CD8-positive, alpha-beta T cell (primary cell): ENCODE measurements at regions of chr5 and their contacts with region 1.

Region 1: GRCh38 chr5:54867310-54867944 is 118.0 kb downstream of the ESM1 start:
- DNase-seq: peak in 2 of 9 experiments; percentile 63 to 76
- ATAC-seq: peak; percentile 72
- H3K4me3 ChIP-seq: no peak overlapping the region
- H3K4me3 Mint-ChIP-seq: peak overlapping the region; percentile 37
- H3K27ac ChIP-seq: no peak overlapping the region
- H3K27ac Mint-ChIP-seq: no peak overlapping the region
- H3K4me1 ChIP-seq: no peaks in the 10 kb centered on the region
- H3K4me1 Mint-ChIP-seq: peaks cover 4% of the 10 kb centered on the region
- H3K27me3 ChIP-seq: no peaks in the 10 kb centered on the region
- H3K27me3 Mint-ChIP-seq: peaks cover 5% of the 10 kb centered on the region
- CTCF ChIP-seq: peak; percentile 71

Region 2: GRCh38 chr5:54492178-54492577 is 375.2 kb before region 1 on chr5:
- CTCF ChIA-PET with region 1: interaction called, 14 read pairs
- POLR2A ChIA-PET with region 1: no interaction called
- intact Hi-C with region 1: no loop called
- DNase-seq: no peak
- ATAC-seq: no peak
- H3K4me3 ChIP-seq: no peak overlapping the region
- H3K4me3 Mint-ChIP-seq: no peak overlapping the region
- H3K27ac ChIP-seq: no peak overlapping the region
- H3K27ac Mint-ChIP-seq: no peak overlapping the region
- H3K4me1 ChIP-seq: no peaks in the 10 kb centered on the region
- H3K4me1 Mint-ChIP-seq: peaks cover 3% of the 10 kb centered on the region
- H3K27me3 ChIP-seq: peaks cover 3 to 4% of the 10 kb centered on the region in 2 experiments
- H3K27me3 Mint-ChIP-seq: peaks cover 8% of the 10 kb centered on the region
- CTCF ChIP-seq: no peak

Region 3: DNA sequence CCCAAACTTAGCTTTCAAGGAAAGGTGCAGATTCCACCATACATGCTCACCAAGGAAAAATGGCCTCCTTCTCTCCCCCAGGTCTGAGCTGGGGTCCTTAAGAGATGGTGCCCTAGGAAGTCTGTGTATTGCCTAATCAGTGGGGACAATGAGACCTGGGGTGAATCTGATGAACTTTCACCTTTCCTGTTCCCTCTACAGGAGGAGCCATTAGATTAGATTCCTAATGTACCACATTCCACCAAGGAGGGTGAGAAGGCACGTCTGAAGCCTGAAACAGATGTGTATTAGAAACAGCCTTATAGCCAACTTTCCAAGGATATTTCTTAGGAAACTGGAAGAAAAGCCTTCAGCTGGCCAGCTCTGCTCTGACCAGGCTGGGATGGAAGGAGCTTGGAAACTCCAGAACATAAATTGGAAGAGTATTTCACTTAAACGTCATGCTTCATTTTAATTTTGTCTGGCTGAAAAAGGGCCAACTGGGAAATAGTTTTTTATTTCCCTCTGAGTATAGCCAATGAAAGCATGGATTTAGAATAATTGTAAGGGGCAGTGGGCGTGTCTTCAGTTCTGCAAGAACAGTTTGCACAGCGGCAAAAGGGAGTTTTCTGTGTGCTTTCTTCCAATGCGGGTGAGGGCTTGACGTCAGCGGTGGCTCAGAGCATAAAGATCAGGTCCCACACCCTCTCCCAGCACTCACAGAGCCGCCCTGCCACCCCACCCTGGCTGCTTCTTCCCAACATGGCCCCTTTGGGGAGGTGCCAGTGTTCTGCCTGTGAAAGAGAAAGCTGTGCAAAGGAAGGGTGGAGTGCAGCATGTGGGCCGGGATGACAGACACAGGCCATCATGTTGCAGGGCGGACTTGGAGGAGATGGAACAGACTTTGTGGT is 92.9 kb before region 1 on chr5:
- CTCF ChIA-PET with region 1: no interaction called
- POLR2A ChIA-PET with region 1: no interaction called
- intact Hi-C with region 1: no loop called
- DNase-seq: no peak
- ATAC-seq: no peak
- H3K4me3 ChIP-seq: no peak overlapping the region
- H3K4me3 Mint-ChIP-seq: no peak overlapping the region
- H3K27ac ChIP-seq: no peak overlapping the region
- H3K27ac Mint-ChIP-seq: no peak overlapping the region
- H3K4me1 ChIP-seq: no peaks in the 10 kb centered on the region
- H3K4me1 Mint-ChIP-seq: no peaks in the 10 kb centered on the region
- H3K27me3 ChIP-seq: no peaks in the 10 kb centered on the region
- H3K27me3 Mint-ChIP-seq: peaks cover 5% of the 10 kb centered on the region
- CTCF ChIP-seq: no peak

Region 4: GRCh38 chr5:54844905-54845566 is 22.4 kb before region 1 on chr5:
- CTCF ChIA-PET with region 1: interaction called, 27 read pairs
- POLR2A ChIA-PET with region 1: no interaction called
- intact Hi-C with region 1: no loop called
- DNase-seq: peak in 2 of 9 experiments; percentile 59 to 70
- ATAC-seq: no peak
- H3K4me3 ChIP-seq: no peak overlapping the region
- H3K4me3 Mint-ChIP-seq: peak overlapping the region; percentile 55
- H3K27ac ChIP-seq: no peak overlapping the region
- H3K27ac Mint-ChIP-seq: peak overlapping the region; percentile 15
- H3K4me1 ChIP-seq: peaks cover 3% of the 10 kb centered on the region
- H3K4me1 Mint-ChIP-seq: peaks cover 3% of the 10 kb centered on the region
- H3K27me3 ChIP-seq: no peaks in the 10 kb centered on the region
- H3K27me3 Mint-ChIP-seq: peaks cover 9% of the 10 kb centered on the region
- CTCF ChIP-seq: peak; percentile 78

Region 5: GRCh38 chr5:54854883-54855581 is 12.4 kb before region 1 on chr5:
- CTCF ChIA-PET with region 1: interaction called, 16 read pairs
- POLR2A ChIA-PET with region 1: no interaction called
- intact Hi-C with region 1: no loop called
- DNase-seq: no peak
- ATAC-seq: no peak
- H3K4me3 ChIP-seq: no peak overlapping the region
- H3K4me3 Mint-ChIP-seq: no peak overlapping the region
- H3K27ac ChIP-seq: no peak overlapping the region
- H3K27ac Mint-ChIP-seq: no peak overlapping the region
- H3K4me1 ChIP-seq: no peaks in the 10 kb centered on the region
- H3K4me1 Mint-ChIP-seq: no peaks in the 10 kb centered on the region
- H3K27me3 ChIP-seq: peaks cover 0 to 3% of the 10 kb centered on the region in 2 experiments
- H3K27me3 Mint-ChIP-seq: peaks cover 23% of the 10 kb centered on the region
- CTCF ChIP-seq: no peak

Region 6: GRCh38 chr5:54881286-54882035 is 14.0 kb after region 1 on chr5:
- CTCF ChIA-PET with region 1: interaction called, 31 read pairs
- POLR2A ChIA-PET with region 1: interaction called, 4 read pairs
- intact Hi-C with region 1: no loop called
- DNase-seq: peak in 3 of 9 experiments; percentile 18 to 60 (median 38)
- ATAC-seq: peak; percentile 63
- H3K4me3 ChIP-seq: no peak overlapping the region
- H3K4me3 Mint-ChIP-seq: no peak overlapping the region
- H3K27ac ChIP-seq: no peak overlapping the region
- H3K27ac Mint-ChIP-seq: no peak overlapping the region
- H3K4me1 ChIP-seq: no peaks in the 10 kb centered on the region
- H3K4me1 Mint-ChIP-seq: peaks cover 9% of the 10 kb centered on the region
- H3K27me3 ChIP-seq: peaks cover 8 to 22% of the 10 kb centered on the region in 2 experiments
- H3K27me3 Mint-ChIP-seq: peaks cover 41% of the 10 kb centered on the region
- CTCF ChIP-seq: no peak

Region 7: DNA sequence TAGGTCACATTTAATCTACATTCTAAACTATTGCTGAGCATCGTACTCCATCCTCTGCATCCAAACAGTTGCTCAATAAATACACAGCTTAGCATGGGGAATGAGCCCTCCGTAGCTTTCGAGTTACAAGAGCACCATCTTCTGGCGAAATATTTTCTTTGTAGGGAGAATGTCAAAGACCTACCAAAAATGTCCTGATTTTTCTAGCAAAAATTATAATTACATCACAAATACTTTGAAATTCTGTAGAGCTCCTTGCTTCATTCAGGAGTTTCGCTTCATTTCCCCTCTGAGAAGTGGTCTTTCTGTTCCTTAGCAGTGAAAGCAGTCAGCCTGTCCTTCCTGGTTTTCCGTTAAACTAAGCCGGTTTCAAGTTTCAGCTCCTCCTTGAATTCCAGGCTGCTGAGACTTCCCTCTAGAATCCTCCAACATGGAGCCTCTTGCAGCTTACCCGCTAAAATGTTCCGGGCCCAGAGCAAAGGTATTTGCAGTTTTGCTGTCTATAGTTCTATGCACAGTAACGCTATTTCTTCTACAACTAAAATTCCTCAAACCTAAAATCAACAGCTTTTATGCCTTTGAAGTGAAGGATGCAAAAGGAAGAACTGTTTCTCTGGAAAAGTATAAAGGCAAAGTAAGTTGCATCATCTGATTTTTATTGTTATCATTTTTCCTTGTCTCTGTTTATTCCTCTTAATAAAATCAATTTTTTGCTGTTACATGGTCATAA is 292.5 kb after region 1 on chr5 and contains the start of gene GPX8:
- CTCF ChIA-PET with region 1: interaction called, 10 read pairs
- POLR2A ChIA-PET with region 1: no interaction called
- intact Hi-C with region 1: no loop called
- DNase-seq: peak in 3 of 9 experiments; percentile 32 to 73 (median 64)
- ATAC-seq: peak; percentile 79
- H3K4me3 ChIP-seq: no peak within 1 kb of the TSS
- H3K4me3 Mint-ChIP-seq: no peak within 1 kb of the TSS
- H3K27ac ChIP-seq: no peak within 1 kb of the TSS
- H3K27ac Mint-ChIP-seq: no peak within 1 kb of the TSS
- H3K4me1 ChIP-seq: no peaks in the 10 kb centered on the region
- H3K4me1 Mint-ChIP-seq: no peaks in the 10 kb centered on the region
- H3K27me3 ChIP-seq: no peaks in the 10 kb centered on the region
- H3K27me3 Mint-ChIP-seq: peaks cover 19% of the 10 kb centered on the region
- CTCF ChIP-seq: peak; percentile 73
- total RNA-seq, gene GPX8: not detected